ENCODE measurements at regions of chr10 and their contacts with region 1.

Region 1: GRCh38 chr10:43574001-43574892 is at the start of gene ZNF239:
- DNase-seq: peak; percentile 45
- ATAC-seq: peak; percentile 100
- H3K4me3 ChIP-seq: peak within 1 kb of the TSS; percentile 62 to 82
- H3K27ac ChIP-seq: peak within 1 kb of the TSS; percentile 88
- H3K4me1 ChIP-seq: peaks cover 7% of the 10 kb centered on the region; the same call in 1 of the 2 replicates
- H3K27me3 ChIP-seq: no peaks in the 10 kb centered on the region
- CTCF ChIP-seq: no peak
- total RNA-seq, gene ZNF239: 18.5 TPM

Region 2: GRCh38 chr10:43644252-43644651 is 70.0 kb after region 1 on chr10:
- CTCF ChIA-PET with region 1: no interaction called
- POLR2A ChIA-PET with region 1: no interaction called
- in situ Hi-C with region 1: loop called (anchors 5 kb)
- intact Hi-C with region 1: no loop called
- DNase-seq: no peak
- ATAC-seq: no peak
- H3K4me3 ChIP-seq: no peak overlapping the region
- H3K27ac ChIP-seq: no peak overlapping the region
- H3K4me1 ChIP-seq: 0 out of 2 replicates have a peak, but pooled peaks cover 1% of the 10 kb centered on the region
- H3K27me3 ChIP-seq: no peaks in the 10 kb centered on the region
- CTCF ChIP-seq: no peak

Measured in Panc1 (cell line).